Posterior cingulate gyrus (tissue), 11 donors: ENCODE measurements at regions of chr5 and their contacts with region 1.

Region 1: DNA sequence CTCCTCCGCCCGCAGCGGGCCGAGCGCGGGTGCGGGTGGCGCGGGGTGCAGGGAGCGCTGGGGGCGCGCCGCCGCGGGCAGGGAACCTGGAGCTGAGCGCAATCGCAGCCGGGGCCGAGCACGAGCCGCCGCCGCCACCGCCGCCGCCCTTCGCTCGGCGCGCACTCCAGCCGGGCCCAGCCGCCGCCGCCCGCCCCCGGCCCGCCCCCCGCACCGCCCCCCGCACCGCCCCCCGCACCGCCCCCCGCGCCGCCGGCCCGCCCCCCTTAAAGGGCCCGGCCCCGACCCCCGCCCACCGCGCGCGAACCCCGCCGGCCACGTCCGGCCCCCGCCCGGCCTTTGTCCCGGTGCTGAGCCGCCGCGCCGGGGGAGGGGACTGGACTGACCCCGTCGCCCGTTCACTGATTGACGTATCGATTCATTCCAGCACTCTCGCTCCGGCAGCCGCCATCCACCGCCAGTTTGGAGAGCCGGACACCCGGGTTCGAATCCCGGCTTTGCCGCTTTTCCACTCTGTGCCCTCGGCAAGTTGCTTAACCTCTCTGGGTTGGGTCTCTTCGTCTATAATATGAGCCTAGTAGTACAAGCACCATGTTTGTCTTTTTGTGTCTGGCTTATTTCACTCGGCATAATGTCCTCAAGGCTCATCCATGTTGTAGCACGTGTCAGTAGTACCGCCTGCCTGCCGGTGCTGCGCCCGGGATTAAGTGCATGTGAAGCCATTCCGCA is at the start of gene SH3PXD2B:
- DNase-seq: peak in 6 of 10 donors; percentile 56 to 93 (median 79)

Region 2: GRCh38 chr5:172106511-172107356 is 347.8 kb before region 1 on chr5:
- intact Hi-C with region 1: loop called (anchors 10 kb)
- DNase-seq: peak in 9 of 10 donors; percentile 56 to 94 (median 75)

Region 3: GRCh38 chr5:172283020-172283861 is 171.3 kb before region 1 on chr5 and contains the start of gene UBTD2:
- intact Hi-C with region 1: loop called (anchors 5 kb)
- DNase-seq: peak; percentile 47 to 95 (median 68)

Region 4: GRCh38 chr5:172412724-172413286 is 41.7 kb before region 1 on chr5:
- intact Hi-C with region 1: loop called (anchors 5 kb)
- DNase-seq: peak in 6 of 10 donors; percentile 52 to 93 (median 60)

Region 5: GRCh38 chr5:172509405-172509781 is 54.9 kb after region 1 on chr5:
- intact Hi-C with region 1: no loop called
- DNase-seq: peak in 8 of 10 donors; percentile 38 to 91 (median 49)